ENCODE measurements at regions of chr19 and their contacts with region 1.

Region 1: DNA sequence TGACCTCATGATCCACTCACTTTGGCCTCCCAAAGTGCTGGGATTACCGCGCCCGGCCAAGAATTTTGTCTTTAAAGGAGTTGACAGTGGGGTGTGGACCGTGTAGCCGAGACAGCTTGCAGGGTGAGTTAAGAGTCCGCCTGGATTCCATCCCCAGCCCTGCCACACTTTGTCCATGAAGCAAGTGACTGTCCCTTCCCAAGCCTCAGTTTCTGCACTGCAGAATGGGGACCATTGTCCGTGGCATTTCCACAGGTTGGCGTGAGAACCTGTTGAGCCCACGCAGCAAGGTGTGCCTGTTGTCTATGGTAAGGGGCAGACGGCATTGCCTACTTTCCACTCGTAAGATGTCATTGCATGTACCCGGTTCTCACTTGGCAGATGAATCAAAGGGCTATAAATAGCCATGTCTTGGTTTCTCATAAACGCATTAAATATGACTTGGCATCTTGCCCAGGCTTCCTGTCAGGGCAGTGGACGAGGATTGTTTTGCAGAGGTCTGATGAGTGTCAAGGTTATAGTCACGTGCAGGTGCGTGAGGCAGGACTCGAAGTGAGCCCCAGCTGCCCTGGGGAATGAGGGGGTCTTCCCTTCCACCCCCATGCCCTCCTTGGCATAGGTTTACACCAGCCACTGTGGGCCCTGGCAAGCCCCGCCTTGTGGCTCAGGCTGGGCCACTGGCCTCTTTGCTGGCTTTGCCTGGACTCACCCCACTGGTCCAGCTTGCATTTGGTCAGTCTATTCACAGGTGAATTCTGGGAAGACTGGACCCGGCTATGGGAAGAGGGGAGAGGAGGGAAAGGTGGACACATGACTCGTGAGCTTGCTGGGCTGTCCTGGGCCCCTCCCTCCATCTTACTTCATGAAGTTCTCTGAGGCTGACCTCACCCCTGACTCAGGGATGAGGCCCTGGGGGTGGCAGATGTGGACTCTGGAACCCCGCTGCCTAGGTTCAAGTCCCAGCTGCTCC is 14.6 kb downstream of the FAM187B start:
- DNase-seq: peak; percentile 89 to 96 (median 93)
- H3K4me3 ChIP-seq: peak overlapping the region in 1 of 2 donors; percentile 17
- H3K4me3 Mint-ChIP-seq: peak overlapping the region; percentile 30 to 85 (median 76)
- H3K27ac ChIP-seq: peak overlapping the region; percentile 98
- H3K27ac Mint-ChIP-seq: peak overlapping the region; percentile 98 to 100 (median 100)
- H3K4me1 ChIP-seq: peaks cover 84% of the 10 kb centered on the region
- H3K4me1 Mint-ChIP-seq: peaks cover 40 to 78% (median 61%) of the 10 kb centered on the region in 4 donors
- H3K27me3 ChIP-seq: no peaks in the 10 kb centered on the region
- H3K27me3 Mint-ChIP-seq: no peaks in the 10 kb centered on the region

Region 2: GRCh38 chr19:35140962-35141637 is 72.8 kb before region 1 on chr19:
- CTCF ChIA-PET with region 1: interaction called, 25 read pairs
- POLR2A ChIA-PET with region 1: interaction called, 112 read pairs
- intact Hi-C with region 1: loop called (anchors 1 kb)
- DNase-seq: peak; percentile 92 to 94 (median 93)
- H3K4me3 ChIP-seq: peak overlapping the region; percentile 24 to 75
- H3K4me3 Mint-ChIP-seq: peak overlapping the region; percentile 82 to 96 (median 88)
- H3K27ac ChIP-seq: no peak overlapping the region
- H3K27ac Mint-ChIP-seq: peak overlapping the region; percentile 88 to 96 (median 90)
- H3K4me1 ChIP-seq: peaks cover 46% of the 10 kb centered on the region
- H3K4me1 Mint-ChIP-seq: peaks cover 28 to 53% (median 39%) of the 10 kb centered on the region in 4 donors
- H3K27me3 ChIP-seq: no peaks in the 10 kb centered on the region
- H3K27me3 Mint-ChIP-seq: no peaks in the 10 kb centered on the region

Region 3: DNA sequence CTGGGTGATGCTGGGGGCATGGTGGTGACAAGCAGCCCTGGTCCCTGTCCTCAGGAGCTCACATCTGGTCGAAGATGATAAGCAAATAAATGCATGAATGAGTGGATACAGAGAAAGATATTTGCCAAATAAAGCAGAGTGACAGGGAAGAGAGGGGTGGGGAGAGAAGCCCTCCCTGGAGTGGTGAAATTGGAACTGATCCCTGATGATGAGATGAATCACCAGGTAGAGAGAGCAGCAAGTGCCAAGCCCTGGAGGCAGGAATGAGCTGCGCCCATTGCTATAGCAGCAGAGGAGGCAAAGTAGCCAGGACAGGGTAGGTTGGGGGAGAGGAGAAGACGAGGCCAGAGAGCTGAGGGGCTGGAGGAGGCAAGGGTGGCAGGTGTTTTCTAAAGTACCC is 45.7 kb before region 1 on chr19:
- CTCF ChIA-PET with region 1: interaction called, 3 read pairs
- POLR2A ChIA-PET with region 1: interaction called, 105 read pairs
- intact Hi-C with region 1: loop called (anchors 5 kb)
- DNase-seq: no peak
- H3K4me3 ChIP-seq: no peak overlapping the region
- H3K4me3 Mint-ChIP-seq: peak overlapping the region in 4 of 8 donors; percentile 20 to 60 (median 48)
- H3K27ac ChIP-seq: peak overlapping the region; percentile 3
- H3K27ac Mint-ChIP-seq: peak overlapping the region; percentile 82 to 95 (median 91)
- H3K4me1 ChIP-seq: peaks cover 67% of the 10 kb centered on the region
- H3K4me1 Mint-ChIP-seq: peaks cover 31 to 80% (median 58%) of the 10 kb centered on the region in 4 donors
- H3K27me3 ChIP-seq: no peaks in the 10 kb centered on the region
- H3K27me3 Mint-ChIP-seq: no peaks in the 10 kb centered on the region

Region 4: DNA sequence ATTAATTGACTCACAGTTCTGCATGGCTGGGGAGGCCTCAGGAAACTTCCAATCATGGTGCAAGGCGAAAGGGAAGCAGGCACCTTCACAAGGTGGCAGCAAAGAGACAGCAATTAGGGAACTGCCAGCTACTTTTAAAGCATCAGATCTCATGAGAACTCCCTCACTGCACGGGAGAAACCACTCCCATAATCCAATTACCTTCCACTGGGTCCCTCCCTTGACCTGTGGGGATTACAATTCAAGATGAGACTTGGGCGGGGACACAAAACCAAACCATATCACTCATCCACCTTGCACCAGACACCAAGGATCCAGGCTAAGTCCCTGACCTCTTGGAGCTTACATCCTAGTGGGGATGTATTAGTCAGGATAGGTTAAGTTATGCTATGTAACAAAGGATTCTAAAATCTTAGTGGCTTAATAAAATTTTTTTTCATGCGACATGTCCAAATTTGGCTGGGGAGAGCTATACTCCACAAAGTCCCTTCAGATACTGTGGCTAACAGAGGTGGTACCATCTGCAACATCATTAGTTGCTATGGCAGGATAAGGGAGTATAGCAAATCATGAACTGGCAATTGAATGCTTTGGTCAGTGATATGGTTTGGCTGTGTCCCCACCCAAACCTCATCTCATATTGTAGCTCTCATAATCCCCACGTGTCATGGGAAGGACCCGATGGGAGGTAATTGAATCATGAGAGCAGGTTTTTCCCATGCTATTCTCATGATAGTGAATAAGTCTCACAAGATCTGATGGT is 22.9 kb after region 1 on chr19:
- CTCF ChIA-PET with region 1: interaction called, 25 read pairs
- POLR2A ChIA-PET with region 1: interaction called, 217 read pairs
- intact Hi-C with region 1: loop called (anchors 1 kb)
- DNase-seq: peak in 3 of 5 donors; percentile 34 to 38 (median 36)
- H3K4me3 ChIP-seq: no peak overlapping the region
- H3K4me3 Mint-ChIP-seq: no peak overlapping the region
- H3K27ac ChIP-seq: no peak overlapping the region
- H3K27ac Mint-ChIP-seq: peak overlapping the region in 5 of 7 donors; percentile 30 to 93 (median 59)
- H3K4me1 ChIP-seq: peaks cover 34% of the 10 kb centered on the region
- H3K4me1 Mint-ChIP-seq: peaks cover 20 to 42% (median 37%) of the 10 kb centered on the region in 4 donors
- H3K27me3 ChIP-seq: no peaks in the 10 kb centered on the region
- H3K27me3 Mint-ChIP-seq: no peaks in the 10 kb centered on the region

Region 5: DNA sequence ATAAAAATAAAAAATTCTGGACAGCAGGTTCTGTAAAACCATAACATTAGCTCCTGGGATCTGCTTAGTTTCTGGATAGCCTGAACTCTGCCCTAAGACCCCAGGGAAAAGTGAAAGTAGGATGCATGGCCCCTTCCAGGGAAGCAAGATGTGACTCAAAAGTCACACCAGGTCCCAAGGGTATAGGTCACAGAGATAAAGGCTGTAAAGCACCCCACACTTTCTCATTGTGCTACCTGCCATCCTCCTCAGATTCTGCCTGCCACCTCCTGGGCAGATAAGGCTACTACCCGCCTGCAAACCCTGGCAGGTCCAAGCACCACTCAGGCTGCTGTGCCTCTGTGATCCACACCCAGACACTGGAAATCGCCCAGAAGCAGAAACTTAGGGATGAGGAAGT is 254.7 kb after region 1 on chr19:
- CTCF ChIA-PET with region 1: no interaction called
- POLR2A ChIA-PET with region 1: no interaction called
- intact Hi-C with region 1: loop called (anchors 10 kb)
- DNase-seq: peak; percentile 64 to 73 (median 71)
- H3K4me3 ChIP-seq: no peak overlapping the region
- H3K4me3 Mint-ChIP-seq: no peak overlapping the region
- H3K27ac ChIP-seq: no peak overlapping the region
- H3K27ac Mint-ChIP-seq: peak overlapping the region in 1 of 7 donors; percentile 47
- H3K4me1 ChIP-seq: peaks cover 12% of the 10 kb centered on the region
- H3K4me1 Mint-ChIP-seq: peaks cover 7 to 17% (median 16%) of the 10 kb centered on the region in 4 donors
- H3K27me3 ChIP-seq: no peaks in the 10 kb centered on the region
- H3K27me3 Mint-ChIP-seq: peaks cover 0 to 1% of the 10 kb centered on the region in 2 donors